ENCODE measurements at regions of chr1 and their contacts with region 1.

Region 1: DNA sequence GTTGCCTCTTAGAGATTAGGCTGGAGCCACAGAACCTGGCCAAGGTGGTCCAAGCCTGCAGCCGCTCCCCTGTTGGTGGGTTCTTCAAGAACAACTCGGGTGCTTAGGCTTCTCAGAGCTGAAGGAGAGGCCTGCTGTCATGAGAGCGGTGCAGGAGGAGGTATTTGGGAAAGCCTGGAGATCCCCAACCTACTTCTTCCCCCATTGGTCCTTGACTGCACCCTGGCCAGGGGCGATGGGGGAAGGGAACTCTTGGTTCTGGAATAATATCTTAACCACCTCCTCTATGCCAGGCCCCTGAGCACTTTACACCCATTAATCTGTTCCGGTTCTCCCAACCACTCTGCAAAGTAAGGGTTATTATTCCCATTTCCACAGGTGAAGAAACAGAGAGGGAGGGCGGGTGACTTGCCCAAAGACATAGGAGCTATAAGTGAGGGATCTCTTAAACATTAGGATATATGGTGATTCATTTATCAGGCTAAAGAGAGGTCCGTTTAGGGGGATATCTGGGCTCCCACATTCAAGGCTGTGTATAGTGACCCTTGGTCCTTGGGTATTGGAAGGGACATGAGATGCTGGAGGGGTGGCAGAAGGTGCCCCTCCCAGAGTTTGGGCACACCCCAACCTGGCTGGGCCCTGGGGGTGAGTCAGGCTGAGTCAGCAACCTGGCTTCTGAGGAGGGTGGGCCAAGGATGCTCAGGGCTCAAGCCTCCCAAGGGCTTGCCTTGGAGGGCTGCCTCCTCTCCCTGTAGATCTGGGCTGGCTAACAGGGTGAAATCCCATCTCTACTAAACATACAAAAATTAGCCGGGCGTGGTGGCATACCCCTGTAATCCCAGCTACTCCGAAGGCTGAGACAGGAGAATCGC is 5.2 kb downstream of the TRNP1 start:
- DNase-seq: no peak
- ATAC-seq: no peak
- H3K4me3 Mint-ChIP-seq: no peak overlapping the region
- H3K27ac Mint-ChIP-seq: no peak overlapping the region
- H3K4me1 Mint-ChIP-seq: peaks cover 10% of the 10 kb centered on the region
- H3K27me3 Mint-ChIP-seq: peaks cover 39% of the 10 kb centered on the region

Region 2: DNA sequence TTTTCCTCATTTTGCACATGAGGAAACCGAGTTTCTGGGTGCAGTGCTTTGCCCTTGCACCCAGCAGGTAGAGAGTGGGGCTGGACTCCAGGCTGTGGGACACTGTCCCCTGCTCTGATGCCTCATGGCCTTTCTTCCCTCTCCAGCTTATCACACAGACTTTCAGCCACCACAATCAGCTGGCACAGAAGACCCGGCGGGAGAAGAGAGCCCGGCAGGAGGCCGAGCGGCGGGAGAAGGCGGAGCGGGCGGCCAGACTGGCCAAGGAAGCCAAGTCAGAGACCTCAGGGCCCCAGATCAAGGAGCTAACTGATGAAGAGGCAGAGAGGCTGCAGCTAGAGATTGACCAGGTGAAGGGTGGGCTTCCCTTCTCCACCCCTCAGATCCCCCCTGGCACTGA is 57.4 kb before region 1 on chr1:
- CTCF ChIA-PET with region 1: no interaction called
- POLR2A ChIA-PET with region 1: no interaction called
- DNase-seq: no peak
- ATAC-seq: no peak
- H3K4me3 Mint-ChIP-seq: no peak overlapping the region
- H3K27ac Mint-ChIP-seq: no peak overlapping the region
- H3K4me1 Mint-ChIP-seq: peaks cover 3% of the 10 kb centered on the region
- H3K27me3 Mint-ChIP-seq: no peaks in the 10 kb centered on the region

Region 3: DNA sequence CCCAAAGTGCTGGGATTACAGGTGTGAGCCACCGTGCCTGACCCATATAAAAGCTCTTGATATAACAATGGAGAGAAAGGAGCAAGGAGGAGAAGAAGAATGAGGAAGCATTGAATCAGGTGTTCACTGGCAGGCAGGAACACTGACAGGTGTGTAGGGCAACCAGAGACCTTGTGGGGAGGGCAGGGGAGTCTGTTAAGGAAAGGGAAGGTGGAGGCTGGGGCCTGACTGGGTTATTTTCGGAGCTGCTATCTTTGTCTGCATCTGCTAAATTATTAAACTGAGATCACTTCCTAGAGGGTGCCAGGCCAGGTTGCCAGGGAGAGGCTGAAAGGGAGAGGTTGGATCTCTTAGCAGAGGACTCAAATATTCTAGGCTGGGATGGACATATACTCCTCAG is 12.0 kb before region 1 on chr1:
- CTCF ChIA-PET with region 1: interaction called, 15 read pairs
- POLR2A ChIA-PET with region 1: no interaction called
- DNase-seq: no peak
- ATAC-seq: no peak
- H3K4me3 Mint-ChIP-seq: no peak overlapping the region
- H3K27ac Mint-ChIP-seq: no peak overlapping the region
- H3K4me1 Mint-ChIP-seq: peaks cover under 1% of the 10 kb centered on the region
- H3K27me3 Mint-ChIP-seq: peaks cover 46% of the 10 kb centered on the region

Region 4: DNA sequence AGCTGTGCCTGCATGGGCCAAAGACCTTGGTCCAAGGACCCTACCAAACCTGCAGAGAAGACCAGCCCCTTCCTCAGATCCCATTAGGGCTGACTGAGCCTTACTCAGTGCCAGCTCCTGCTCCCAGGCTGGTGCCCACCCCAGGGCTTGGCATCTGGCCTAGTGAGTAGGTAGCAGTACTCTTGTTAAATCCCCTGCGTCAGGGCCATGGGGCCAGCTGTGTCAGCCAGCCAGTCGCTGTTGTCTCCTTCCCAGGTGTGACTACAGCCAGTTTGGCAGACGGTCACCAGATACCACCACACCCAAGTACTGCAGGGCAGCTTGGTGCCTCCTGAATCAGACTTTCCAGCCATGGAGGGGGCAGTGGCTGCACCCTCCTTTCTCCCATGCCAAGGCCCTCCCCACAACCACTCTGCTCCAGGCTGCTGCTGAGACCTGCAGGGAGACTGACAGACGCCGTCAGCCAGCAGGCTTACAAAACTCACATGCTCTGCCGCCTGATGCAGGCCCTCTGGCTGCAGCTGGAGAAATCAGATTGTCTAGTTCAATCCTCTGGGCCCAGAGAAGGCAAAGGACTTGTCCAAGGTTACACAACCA is 11.0 kb after region 1 on chr1:
- CTCF ChIA-PET with region 1: interaction called, 17 read pairs
- POLR2A ChIA-PET with region 1: no interaction called
- DNase-seq: no peak
- ATAC-seq: no peak
- H3K4me3 Mint-ChIP-seq: no peak overlapping the region
- H3K27ac Mint-ChIP-seq: no peak overlapping the region
- H3K4me1 Mint-ChIP-seq: peaks cover 8% of the 10 kb centered on the region
- H3K27me3 Mint-ChIP-seq: peaks cover 21% of the 10 kb centered on the region

Region 5: GRCh38 chr1:27090911-27091310 is 92.2 kb after region 1 on chr1:
- CTCF ChIA-PET with region 1: no interaction called
- POLR2A ChIA-PET with region 1: no interaction called
- DNase-seq: no peak
- ATAC-seq: no peak
- H3K4me3 Mint-ChIP-seq: no peak overlapping the region
- H3K27ac Mint-ChIP-seq: no peak overlapping the region
- H3K4me1 Mint-ChIP-seq: no peaks in the 10 kb centered on the region
- H3K27me3 Mint-ChIP-seq: no peaks in the 10 kb centered on the region

Region 6: GRCh38 chr1:27176323-27176722 is 177.7 kb after region 1 on chr1:
- CTCF ChIA-PET with region 1: no interaction called
- POLR2A ChIA-PET with region 1: no interaction called
- DNase-seq: no peak
- ATAC-seq: no peak
- H3K4me3 Mint-ChIP-seq: no peak overlapping the region
- H3K27ac Mint-ChIP-seq: no peak overlapping the region
- H3K4me1 Mint-ChIP-seq: no peaks in the 10 kb centered on the region
- H3K27me3 Mint-ChIP-seq: no peaks in the 10 kb centered on the region